SK-N-SH (cell line): ENCODE measurements at regions of chr21 and their contacts with region 1.

Region 1: GRCh38 chr21:38219049-38219628 is 37.7 kb upstream of the KCNJ15 start:
- DNase-seq: peak; percentile 58
- H3K4me3 ChIP-seq: no peak overlapping the region
- H3K27ac ChIP-seq: no peak overlapping the region
- H3K4me1 ChIP-seq: no peaks in the 10 kb centered on the region
- H3K27me3 ChIP-seq: no peaks in the 10 kb centered on the region
- CTCF ChIP-seq: peak; percentile 97
- EP300 ChIP-seq: no peak
- RAD21 ChIP-seq: peak; percentile 73

Region 2: DNA sequence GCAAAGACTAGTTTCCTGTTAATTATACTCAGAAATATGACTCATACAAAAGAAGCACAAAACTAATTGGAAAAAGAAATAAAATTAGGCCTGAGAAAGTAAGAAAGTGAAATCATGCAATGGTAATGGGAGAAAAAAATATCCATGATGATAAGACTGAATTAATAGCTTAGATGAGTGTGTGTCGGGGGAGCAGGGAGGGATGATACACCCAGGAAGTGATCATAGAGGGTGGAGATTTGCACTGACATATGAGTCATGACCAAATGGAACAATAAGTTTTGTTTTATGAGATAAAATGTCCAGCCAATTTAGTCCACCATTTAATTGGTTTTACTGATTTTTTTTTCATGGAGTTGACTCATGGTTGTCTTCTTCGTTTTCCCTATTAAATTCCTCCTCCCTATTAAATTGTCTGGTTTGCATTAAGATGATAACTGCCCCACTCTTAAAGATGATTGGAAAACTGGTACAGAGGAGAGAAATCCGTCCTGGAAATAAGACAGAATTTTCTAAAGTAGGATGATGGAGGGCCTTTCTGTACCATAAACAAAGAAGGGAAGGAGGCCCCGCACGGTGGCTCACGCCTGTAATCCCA is 191.1 kb before region 1 on chr21:
- CTCF ChIA-PET with region 1: no interaction called
- POLR2A ChIA-PET with region 1: no interaction called
- DNase-seq: no peak
- H3K4me3 ChIP-seq: no peak overlapping the region
- H3K27ac ChIP-seq: no peak overlapping the region
- H3K4me1 ChIP-seq: no peaks in the 10 kb centered on the region
- H3K27me3 ChIP-seq: no peaks in the 10 kb centered on the region
- CTCF ChIP-seq: no peak
- EP300 ChIP-seq: no peak
- RAD21 ChIP-seq: no peak

Region 3: GRCh38 chr21:38205940-38206339 is 13.2 kb before region 1 on chr21:
- CTCF ChIA-PET with region 1: interaction called, 10 read pairs
- POLR2A ChIA-PET with region 1: no interaction called
- DNase-seq: no peak
- H3K4me3 ChIP-seq: no peak overlapping the region
- H3K27ac ChIP-seq: no peak overlapping the region
- H3K4me1 ChIP-seq: no peaks in the 10 kb centered on the region
- H3K27me3 ChIP-seq: no peaks in the 10 kb centered on the region; the same call in 1 of the 2 replicates
- CTCF ChIP-seq: no peak
- EP300 ChIP-seq: no peak
- RAD21 ChIP-seq: no peak

Region 4: GRCh38 chr21:38229260-38229868 is 10.2 kb after region 1 on chr21:
- CTCF ChIA-PET with region 1: interaction called, 19 read pairs
- POLR2A ChIA-PET with region 1: no interaction called
- DNase-seq: no peak
- H3K4me3 ChIP-seq: no peak overlapping the region
- H3K27ac ChIP-seq: no peak overlapping the region
- H3K4me1 ChIP-seq: no peaks in the 10 kb centered on the region
- H3K27me3 ChIP-seq: no peaks in the 10 kb centered on the region
- CTCF ChIP-seq: no peak
- EP300 ChIP-seq: no peak
- RAD21 ChIP-seq: no peak

Region 5: DNA sequence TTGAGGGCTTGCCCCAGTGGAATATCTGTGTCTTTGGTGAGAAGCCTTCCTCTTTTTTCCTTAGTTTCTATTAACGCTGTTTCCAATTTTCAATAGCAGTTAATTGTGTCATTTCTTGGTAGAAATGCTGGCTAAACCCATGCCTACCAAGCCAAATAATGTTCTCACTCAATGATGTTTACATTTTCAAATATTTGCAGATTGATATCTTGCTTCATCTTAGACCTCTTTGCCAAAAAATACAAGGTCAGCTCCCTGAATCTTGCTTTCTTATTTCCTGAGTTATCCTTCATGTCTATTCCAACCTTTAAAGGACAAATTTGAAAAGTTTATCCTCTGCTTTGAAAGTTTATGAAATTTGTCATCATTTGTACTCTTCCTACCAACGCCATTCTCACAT is 42.7 kb after region 1 on chr21:
- CTCF ChIA-PET with region 1: no interaction called
- POLR2A ChIA-PET with region 1: no interaction called
- DNase-seq: no peak
- H3K4me3 ChIP-seq: no peak overlapping the region
- H3K27ac ChIP-seq: peak overlapping the region in 1 of 2 experiments; percentile 6; a peak in 1 of 4 replicates
- H3K4me1 ChIP-seq: no peaks in the 10 kb centered on the region
- H3K27me3 ChIP-seq: no peaks in the 10 kb centered on the region
- CTCF ChIP-seq: no peak
- EP300 ChIP-seq: no peak
- RAD21 ChIP-seq: no peak

Region 6: DNA sequence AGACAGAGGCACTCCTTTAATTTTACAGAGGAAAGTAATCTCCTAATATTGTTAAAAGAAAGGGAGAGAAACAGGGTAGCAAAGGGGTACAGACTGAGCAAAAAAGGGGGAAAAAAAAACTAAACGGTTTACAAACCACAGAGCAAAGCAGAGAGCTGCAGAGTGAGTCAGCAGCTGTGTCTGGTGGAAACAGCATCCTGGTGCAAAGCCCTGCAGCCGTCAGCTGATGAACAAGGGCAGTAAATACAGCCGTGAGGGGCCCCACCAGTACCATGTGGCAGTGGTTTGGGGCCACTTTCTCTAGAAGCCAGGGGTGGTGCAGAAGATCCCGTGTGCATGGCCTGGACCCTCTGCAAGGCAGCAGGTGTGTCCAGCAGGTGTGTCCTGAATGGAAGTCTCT is 167.8 kb after region 1 on chr21:
- CTCF ChIA-PET with region 1: no interaction called
- POLR2A ChIA-PET with region 1: no interaction called
- DNase-seq: no peak
- H3K4me3 ChIP-seq: no peak overlapping the region
- H3K27ac ChIP-seq: no peak overlapping the region
- H3K4me1 ChIP-seq: no peaks in the 10 kb centered on the region; a peak in 1 of 4 replicates
- H3K27me3 ChIP-seq: no peaks in the 10 kb centered on the region
- CTCF ChIP-seq: no peak
- EP300 ChIP-seq: no peak
- RAD21 ChIP-seq: no peak